ENCODE measurements at regions of chr20 and their contacts with region 1.

Region 1: DNA sequence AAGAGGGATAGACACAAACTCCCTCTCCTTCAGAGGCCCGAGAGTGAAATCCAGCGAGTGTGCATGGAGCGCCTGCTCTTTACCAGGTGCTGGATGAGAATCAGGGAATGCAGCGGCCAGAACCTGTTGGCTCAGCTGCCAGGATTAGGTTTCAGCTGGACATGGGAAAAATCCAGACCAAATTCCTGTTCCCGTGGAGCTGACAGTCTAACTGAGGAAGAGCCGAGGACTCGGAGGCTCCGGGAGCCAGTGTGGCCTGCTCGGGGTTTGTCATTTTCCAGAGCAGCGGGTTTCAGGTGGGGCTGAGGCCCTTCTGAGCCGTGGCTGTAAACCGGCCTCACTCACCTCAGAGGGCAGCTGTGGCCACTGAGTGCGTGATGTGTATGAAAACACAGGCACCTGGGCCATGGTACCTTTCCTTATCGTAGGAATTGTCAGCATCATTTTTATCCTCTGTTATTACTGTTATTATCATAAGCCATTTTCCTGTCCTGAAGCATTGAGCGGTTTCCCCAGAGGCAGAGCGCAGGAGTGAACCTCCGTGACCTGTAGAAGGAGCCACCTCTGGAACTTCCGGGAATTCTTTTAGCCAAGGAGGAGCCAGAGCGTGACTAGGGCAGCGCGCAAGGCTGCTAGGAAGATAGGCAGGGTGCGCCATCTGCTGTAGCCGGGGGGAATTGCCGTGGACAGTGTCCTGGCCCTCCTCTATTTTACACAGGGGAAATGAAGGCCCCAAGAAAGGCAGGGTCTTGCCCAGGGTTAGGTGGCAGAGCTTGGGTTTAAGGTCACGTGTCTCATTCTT is 27.3 kb downstream of the PKIG start:
- DNase-seq: peak; percentile 83 to 92 (median 88)
- H3K4me3 ChIP-seq: peak overlapping the region in 57 of 59 donors; percentile 0 to 65 (median 42)
- H3K27ac ChIP-seq: peak overlapping the region in 58 of 59 donors; percentile 33 to 93 (median 82)
- H3K27me3 ChIP-seq: no peaks in the 10 kb centered on the region
- CTCF ChIP-seq: peak; percentile 91 to 100 (median 98)

Region 2: GRCh38 chr20:44217342-44218092 is 392.2 kb before region 1 on chr20:
- intact Hi-C with region 1: loop called (anchors 5 kb)
- DNase-seq: peak; percentile 12 to 67 (median 62)
- H3K4me3 ChIP-seq: no peak overlapping the region
- H3K27ac ChIP-seq: peak overlapping the region in 3 of 59 donors; percentile 2 to 36 (median 13)
- H3K27me3 ChIP-seq: no peaks in the 10 kb centered on the region
- CTCF ChIP-seq: peak; percentile 40 to 89 (median 74)

Region 3: DNA sequence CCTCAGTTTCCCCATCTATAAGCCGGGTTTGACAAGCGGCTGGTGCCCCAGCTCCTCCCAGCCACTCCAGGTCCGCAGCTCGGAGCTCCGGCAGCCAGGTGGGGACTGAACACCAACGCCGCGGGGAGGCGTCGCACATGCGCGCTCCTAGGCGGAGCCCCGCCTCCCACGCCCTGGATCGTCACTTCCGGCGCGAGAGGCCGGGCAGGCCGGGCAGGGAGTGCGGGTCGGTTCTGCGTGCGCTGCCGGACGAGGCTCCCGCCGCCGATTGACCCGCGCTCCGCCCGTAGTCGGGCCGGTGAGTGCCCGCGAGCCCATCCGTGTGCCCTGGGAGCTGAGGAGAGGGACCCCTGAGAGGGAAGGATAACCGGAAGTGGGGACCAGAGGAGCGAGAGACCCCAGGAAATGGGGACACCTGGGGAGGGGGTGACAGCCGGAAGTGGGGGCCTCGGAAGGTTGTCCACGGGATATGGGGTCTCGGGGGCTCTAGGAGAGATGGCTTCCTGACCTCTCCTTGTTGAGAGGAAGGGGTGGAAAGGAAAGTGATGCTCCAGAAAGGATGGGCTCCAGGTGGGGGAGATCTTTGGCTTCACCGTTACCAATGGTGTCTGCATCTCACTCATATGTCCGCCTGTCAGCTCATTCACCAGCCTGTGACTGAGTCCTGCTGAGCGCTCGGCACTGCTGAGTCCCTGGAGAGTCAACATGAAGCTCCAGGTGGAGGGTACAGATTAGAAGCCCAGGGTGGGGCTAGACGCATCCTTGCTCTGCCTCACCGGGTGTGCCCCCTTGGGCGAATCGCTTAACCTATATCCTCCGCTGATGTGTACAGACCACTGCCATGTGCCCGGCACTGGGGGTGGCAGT is 133.8 kb before region 1 on chr20 and contains the start of gene TTPAL:
- intact Hi-C with region 1: loop called (anchors 1 to 5 kb)
- DNase-seq: peak; percentile 77 to 96 (median 87)
- H3K4me3 ChIP-seq: peak within 1 kb of the TSS; percentile 63 to 98 (median 87)
- H3K27ac ChIP-seq: peak within 1 kb of the TSS; percentile 70 to 97 (median 90)
- H3K27me3 ChIP-seq: no peaks in the 10 kb centered on the region
- CTCF ChIP-seq: peak; percentile 14 to 79 (median 62)
- total RNA-seq, gene TTPAL: 10.0 to 26.4 (median 18.3) TPM

Region 4: GRCh38 chr20:44572541-44573500 is 36.9 kb before region 1 on chr20:
- intact Hi-C with region 1: loop called in 1 of 2 experiments (anchors 5 kb)
- DNase-seq: peak; percentile 41 to 88 (median 81)
- H3K4me3 ChIP-seq: peak overlapping the region in 41 of 59 donors; percentile 2 to 56 (median 26)
- H3K27ac ChIP-seq: peak overlapping the region; percentile 77 to 97 (median 93)
- H3K27me3 ChIP-seq: no peaks in the 10 kb centered on the region
- CTCF ChIP-seq: peak in 2 of 56 donors; percentile 10 to 12